ENCODE measurements at regions of chr1 and their contacts with region 1.

Region 1: DNA sequence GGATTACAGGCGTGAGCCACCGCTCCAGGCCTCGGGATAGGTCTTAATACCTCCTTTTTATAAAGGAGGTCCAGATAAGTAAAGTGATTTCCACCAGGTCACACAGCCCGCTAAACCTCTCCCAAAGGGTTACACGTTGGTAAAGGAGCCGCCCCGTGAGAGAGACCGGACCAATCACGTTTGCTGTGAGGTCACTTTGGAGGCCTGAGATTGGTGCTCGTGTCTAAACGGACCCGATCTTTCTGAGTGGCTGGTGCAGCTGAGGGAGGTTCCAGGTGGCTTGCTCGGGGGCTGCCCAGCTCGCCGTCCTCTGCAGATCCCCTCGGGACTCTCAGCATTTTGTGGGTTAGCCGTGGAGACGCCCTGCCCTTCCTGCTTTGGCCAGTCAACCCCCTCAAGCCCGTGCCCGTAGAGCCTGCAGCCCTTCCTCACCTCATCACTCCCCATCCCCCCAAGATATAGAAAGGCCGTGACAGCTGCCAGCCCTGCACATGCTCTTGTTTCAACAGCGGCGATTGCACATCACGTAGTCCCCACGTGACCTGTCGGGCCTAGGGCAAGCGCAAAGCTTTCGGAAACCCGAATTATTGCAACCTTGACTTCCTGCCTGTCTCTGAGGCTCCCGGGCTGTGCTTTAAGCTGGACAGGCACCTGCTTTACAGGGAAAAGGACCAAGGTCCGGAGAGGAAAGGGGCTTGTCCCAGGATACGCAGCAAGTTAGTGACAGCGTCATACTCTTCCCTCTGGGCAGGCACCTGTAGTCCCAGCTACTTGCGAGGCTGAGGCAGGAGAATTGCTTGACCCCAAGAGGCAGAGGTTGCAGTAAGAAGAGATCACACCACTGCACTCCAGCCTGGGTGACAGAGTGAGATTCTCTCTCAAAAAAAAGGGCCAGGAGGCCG is 5.0 kb upstream of the COA7 start:
- DNase-seq: peak; percentile 90 to 94 (median 91)
- ATAC-seq: peak; percentile 90 to 94 (median 93)
- H3K4me3 ChIP-seq: peak overlapping the region in 11 of 12 donors; percentile 39 to 74 (median 61)
- H3K27ac ChIP-seq: peak overlapping the region; percentile 75 to 91 (median 86)
- H3K4me1 ChIP-seq: peaks cover 0 to 43% (median 8%) of the 10 kb centered on the region in 12 donors
- H3K27me3 ChIP-seq: no peaks in the 10 kb centered on the region
- CTCF ChIP-seq: no peak
- POLR2A ChIP-seq: peak in 1 of 2 donors; percentile 67

Region 2: DNA sequence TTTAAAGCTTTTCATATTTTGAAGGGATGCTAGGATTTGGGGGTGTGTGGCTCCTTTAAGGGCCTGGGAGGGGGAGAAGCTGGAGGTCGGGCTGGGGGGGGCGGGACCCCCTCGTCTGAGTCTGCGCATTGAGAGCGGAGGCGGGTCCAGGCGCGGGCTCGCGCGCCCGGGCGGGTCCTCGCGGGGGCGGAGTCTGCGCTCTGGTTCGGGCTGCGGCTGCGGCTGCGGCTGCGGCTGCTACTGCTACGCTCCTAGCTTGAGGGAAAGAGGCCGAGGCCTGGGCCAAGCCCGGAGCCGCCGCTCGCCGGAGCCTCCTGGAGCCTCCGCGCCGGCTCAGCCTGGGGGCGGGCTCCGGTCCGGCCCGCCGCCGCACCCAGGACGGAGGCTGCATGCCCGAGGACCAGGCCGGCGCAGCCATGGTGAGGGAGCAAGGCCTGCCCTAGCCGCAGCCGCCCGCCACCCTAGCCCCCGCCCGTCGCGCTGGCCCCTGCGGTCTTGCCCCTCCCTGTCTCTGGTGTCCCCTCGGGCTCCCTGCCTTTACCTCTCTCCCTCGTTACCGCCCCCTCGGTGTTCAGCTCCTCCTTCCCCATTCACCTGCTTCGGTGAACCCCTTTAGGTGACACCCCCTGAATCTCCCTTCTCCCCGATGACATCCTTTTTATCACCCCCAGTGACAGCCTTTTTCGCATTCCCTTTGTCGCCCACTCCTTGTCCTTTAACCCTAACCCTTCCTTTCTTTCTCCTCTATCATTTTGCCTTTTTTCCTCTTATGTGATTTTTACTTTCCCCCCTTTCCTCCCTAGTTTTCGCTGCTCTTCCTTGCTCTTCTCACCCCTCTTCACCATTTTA is 23.4 kb after region 1 on chr1 and contains the start of gene ZYG11B:
- intact Hi-C with region 1: loop called in 3 of 10 experiments (anchors 2 kb)
- DNase-seq: peak; percentile 92 to 96 (median 92)
- ATAC-seq: peak; percentile 84 to 98 (median 96)
- H3K4me3 ChIP-seq: peak within 1 kb of the TSS; percentile 73 to 99 (median 92)
- H3K27ac ChIP-seq: peak within 1 kb of the TSS; percentile 59 to 95 (median 90)
- H3K4me1 ChIP-seq: peaks cover 5 to 33% (median 23%) of the 10 kb centered on the region in 12 donors
- H3K27me3 ChIP-seq: no peaks in the 10 kb centered on the region
- CTCF ChIP-seq: no peak
- POLR2A ChIP-seq: peak; percentile 53 to 84
- total RNA-seq, gene ZYG11B: 45.8 to 85.4 (median 72.4) TPM

Region 3: DNA sequence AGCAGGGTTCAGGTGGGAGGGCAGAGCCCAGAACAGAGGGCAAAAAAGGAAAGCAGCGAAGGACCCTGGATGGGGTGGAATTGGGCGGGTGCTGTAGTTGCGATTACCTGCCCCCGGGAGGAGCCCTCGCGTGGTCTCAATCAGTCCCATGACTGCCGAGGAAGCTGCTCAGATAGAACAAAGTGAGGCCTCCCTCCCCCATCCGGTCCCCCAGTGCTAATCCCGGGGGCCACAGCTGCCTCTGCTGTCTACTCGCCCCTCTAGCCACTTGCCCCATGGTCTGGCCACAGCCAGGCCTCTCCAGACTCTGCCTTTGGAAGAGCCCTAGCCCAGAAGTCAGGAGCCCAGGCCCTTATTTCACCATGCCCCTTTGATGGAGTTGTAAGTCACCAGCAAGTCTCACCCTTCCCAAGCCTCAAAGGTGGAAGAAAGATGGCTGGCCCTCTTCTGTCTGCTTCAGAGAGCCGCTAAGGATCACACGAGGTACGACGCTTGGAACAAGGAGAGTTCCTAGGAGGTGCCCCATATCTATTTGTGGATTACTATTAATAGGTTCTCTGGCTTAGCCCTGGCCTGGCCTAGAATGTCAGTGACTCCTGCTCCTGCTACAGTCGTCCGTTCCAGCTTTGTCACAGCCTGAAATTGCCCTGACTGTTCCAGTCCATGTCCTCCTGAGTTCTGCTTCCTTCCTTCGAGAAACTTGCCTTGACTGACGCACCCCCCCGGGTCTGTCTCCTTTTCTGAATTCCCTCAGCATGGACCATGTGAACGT is 202.0 kb after region 1 on chr1:
- intact Hi-C with region 1: loop called in 2 of 10 experiments (anchors 10 kb)
- DNase-seq: peak in 4 of 5 donors; percentile 50 to 76 (median 65)
- ATAC-seq: peak; percentile 95 to 96 (median 96)
- H3K4me3 ChIP-seq: no peak overlapping the region
- H3K27ac ChIP-seq: peak overlapping the region; percentile 63 to 94 (median 80)
- H3K4me1 ChIP-seq: peaks cover 0 to 29% (median 13%) of the 10 kb centered on the region in 12 donors
- H3K27me3 ChIP-seq: no peaks in the 10 kb centered on the region
- CTCF ChIP-seq: peak in 8 of 12 donors; percentile 16 to 50 (median 28)
- POLR2A ChIP-seq: no peak

Region 4: GRCh38 chr1:52913537-52913936 is 210.4 kb after region 1 on chr1:
- intact Hi-C with region 1: loop called in 2 of 10 experiments (anchors 10 kb)
- DNase-seq: no peak
- ATAC-seq: no peak
- H3K4me3 ChIP-seq: no peak overlapping the region
- H3K27ac ChIP-seq: no peak overlapping the region
- H3K4me1 ChIP-seq: peaks cover 0 to 33% (median 8%) of the 10 kb centered on the region in 12 donors
- H3K27me3 ChIP-seq: no peaks in the 10 kb centered on the region
- CTCF ChIP-seq: no peak
- POLR2A ChIP-seq: no peak

Region 5: GRCh38 chr1:52920791-52921291 is 217.7 kb after region 1 on chr1:
- intact Hi-C with region 1: loop called in 5 of 10 experiments (anchors 5 to 10 kb)
- DNase-seq: peak in 4 of 5 donors; percentile 32 to 55 (median 44)
- ATAC-seq: peak; percentile 47 to 77 (median 72)
- H3K4me3 ChIP-seq: peak overlapping the region; percentile 52 to 89 (median 74)
- H3K27ac ChIP-seq: peak overlapping the region; percentile 68 to 93 (median 89)
- H3K4me1 ChIP-seq: peaks cover 0 to 30% (median 14%) of the 10 kb centered on the region in 12 donors
- H3K27me3 ChIP-seq: peaks cover 0 to 7% (median 0%) of the 10 kb centered on the region in 9 donors
- CTCF ChIP-seq: no peak
- POLR2A ChIP-seq: no peak

Region 6: DNA sequence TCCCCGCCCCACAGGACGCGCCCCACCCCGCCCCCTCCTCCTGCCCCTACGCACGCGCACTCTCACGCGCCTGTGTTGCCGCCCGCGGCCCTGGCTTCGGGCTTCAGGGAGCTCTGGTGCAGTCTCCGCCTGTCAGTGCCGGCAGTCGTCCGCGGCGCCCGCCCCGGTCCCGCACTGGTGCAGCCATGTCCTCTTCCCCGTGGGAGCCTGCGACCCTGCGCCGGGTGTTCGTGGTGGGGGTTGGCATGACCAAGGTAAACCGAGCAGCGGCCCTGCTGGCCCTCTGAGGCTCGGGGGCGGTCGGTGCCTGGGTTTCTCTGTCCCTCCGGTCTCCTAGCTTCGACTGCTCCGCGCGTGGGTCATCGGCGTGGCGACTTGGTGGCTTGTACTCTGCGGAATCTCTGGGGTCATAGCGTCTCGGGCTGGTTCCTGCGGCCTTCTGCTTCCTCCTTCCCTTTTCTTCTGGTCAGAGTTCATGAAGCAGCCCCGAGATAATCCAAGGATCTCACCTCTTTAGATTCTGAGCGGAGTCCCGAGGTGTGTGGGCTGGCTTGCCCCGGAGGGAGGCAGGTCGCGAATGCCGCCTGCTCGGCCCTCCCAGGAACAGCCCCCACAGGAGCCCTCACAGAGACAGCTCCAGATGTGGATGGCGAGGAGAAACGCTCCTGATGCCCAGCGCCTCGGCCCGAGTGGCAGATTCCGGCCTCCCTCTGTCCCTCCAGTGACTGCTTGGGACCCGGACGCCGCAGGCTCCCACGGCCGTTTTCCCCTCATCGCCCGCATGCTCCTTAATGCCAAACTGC is 224.3 kb after region 1 on chr1 and contains the start of gene SCP2:
- intact Hi-C with region 1: loop called in 4 of 10 experiments (anchors 5 to 10 kb)
- DNase-seq: peak; percentile 86 to 94 (median 88)
- ATAC-seq: peak; percentile 89 to 97 (median 96)
- H3K4me3 ChIP-seq: peak within 1 kb of the TSS; percentile 43 to 90 (median 80)
- H3K27ac ChIP-seq: peak within 1 kb of the TSS; percentile 57 to 93 (median 82)
- H3K4me1 ChIP-seq: peaks cover 0 to 33% (median 16%) of the 10 kb centered on the region in 12 donors
- H3K27me3 ChIP-seq: no peaks in the 10 kb centered on the region
- CTCF ChIP-seq: no peak
- POLR2A ChIP-seq: peak in 1 of 2 donors; percentile 64
- total RNA-seq, gene SCP2: 83.4 to 143 (median 132) TPM

Measured in heart left ventricle (tissue), 16 donors.